Activated CD4-positive, alpha-beta T cell treated with anti-CD3 and anti-CD28 coated beads for 36 hours (primary cell): ENCODE measurements at regions of chr15 and their contacts with region 1.

Region 1: GRCh38 chr15:80058851-80059785 is at the start of gene ZFAND6:
- DNase-seq: peak; percentile 97
- ATAC-seq: peak; percentile 83
- H3K4me3 Mint-ChIP-seq: peak within 1 kb of the TSS; percentile 85
- H3K27ac Mint-ChIP-seq: peak within 1 kb of the TSS; percentile 87
- H3K4me1 Mint-ChIP-seq: peaks cover 25% of the 10 kb centered on the region
- H3K27me3 Mint-ChIP-seq: no peaks in the 10 kb centered on the region
- total RNA-seq, gene ZFAND6: 30.2 to 37.2 TPM

Region 2: GRCh38 chr15:79310983-79311900 is 747.9 kb before region 1 on chr15 and contains the start of gene TMED3:
- CTCF ChIA-PET with region 1: no interaction called
- POLR2A ChIA-PET with region 1: no interaction called
- intact Hi-C with region 1: loop called in 1 of 2 experiments (anchors 2 kb)
- DNase-seq: peak; percentile 90
- ATAC-seq: peak; percentile 98
- H3K4me3 Mint-ChIP-seq: peak within 1 kb of the TSS; percentile 81
- H3K27ac Mint-ChIP-seq: peak within 1 kb of the TSS; percentile 77
- H3K4me1 Mint-ChIP-seq: peaks cover 28% of the 10 kb centered on the region
- H3K27me3 Mint-ChIP-seq: peaks cover 23% of the 10 kb centered on the region
- total RNA-seq, gene TMED3: 33.5 to 37.2 TPM

Region 3: DNA sequence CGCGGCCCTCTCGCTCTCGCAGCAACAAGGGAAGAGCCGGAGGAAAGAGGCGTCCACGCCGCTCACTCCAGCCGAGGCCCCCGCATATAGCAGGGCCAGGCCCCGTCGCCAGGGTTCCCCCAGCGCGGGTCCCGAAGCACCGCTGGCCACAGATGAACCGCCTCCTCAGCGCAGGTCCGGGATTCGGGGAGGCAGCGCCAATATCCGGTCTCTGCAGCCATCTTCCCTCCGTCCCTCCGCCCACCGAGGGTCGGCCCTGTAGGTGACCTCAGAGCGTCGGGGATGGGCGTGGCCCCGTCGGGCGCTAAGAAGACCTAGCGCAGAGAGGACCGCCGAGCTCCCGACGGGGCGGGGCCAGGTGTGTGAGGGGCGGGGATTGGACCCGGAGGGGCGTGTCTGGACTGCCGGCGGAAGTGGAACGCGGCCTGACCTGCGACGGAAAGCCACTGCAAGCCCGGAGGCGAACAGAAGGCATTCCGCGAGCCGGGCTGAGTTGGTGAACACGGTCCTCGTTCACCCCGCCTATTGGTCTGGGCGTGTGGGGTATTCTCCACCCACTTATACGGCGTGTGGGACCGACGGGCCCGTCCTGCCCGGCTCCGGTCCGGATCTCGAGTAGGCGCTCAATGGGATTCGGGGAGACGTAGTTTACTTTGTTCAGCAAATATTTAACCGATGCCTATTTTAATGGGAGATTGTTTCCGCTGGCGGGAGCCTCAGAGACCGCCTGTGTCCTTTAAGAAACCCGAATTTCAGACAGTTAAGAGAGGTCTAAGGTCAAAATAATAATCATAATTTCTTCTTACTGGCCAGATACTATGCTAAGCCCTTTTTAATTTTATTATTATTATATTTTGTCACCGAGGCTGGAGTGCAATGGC is 135.4 kb before region 1 on chr15:
- CTCF ChIA-PET with region 1: no interaction called
- POLR2A ChIA-PET with region 1: interaction called, 4 read pairs
- intact Hi-C with region 1: loop called (anchors 1 kb)
- DNase-seq: peak; percentile 99
- ATAC-seq: peak; percentile 94
- H3K4me3 Mint-ChIP-seq: peak overlapping the region; percentile 89
- H3K27ac Mint-ChIP-seq: peak overlapping the region; percentile 94
- H3K4me1 Mint-ChIP-seq: peaks cover 23% of the 10 kb centered on the region
- H3K27me3 Mint-ChIP-seq: no peaks in the 10 kb centered on the region

Region 4: GRCh38 chr15:80072285-80072994 is 13.3 kb after region 1 on chr15:
- CTCF ChIA-PET with region 1: interaction called, 17 read pairs
- POLR2A ChIA-PET with region 1: interaction called, 5 read pairs
- intact Hi-C with region 1: loop called (anchors 1 kb)
- DNase-seq: no peak
- ATAC-seq: peak; percentile 98
- H3K4me3 Mint-ChIP-seq: peak overlapping the region; percentile 80
- H3K27ac Mint-ChIP-seq: peak overlapping the region; percentile 40
- H3K4me1 Mint-ChIP-seq: peaks cover 59% of the 10 kb centered on the region
- H3K27me3 Mint-ChIP-seq: no peaks in the 10 kb centered on the region

Region 5: DNA sequence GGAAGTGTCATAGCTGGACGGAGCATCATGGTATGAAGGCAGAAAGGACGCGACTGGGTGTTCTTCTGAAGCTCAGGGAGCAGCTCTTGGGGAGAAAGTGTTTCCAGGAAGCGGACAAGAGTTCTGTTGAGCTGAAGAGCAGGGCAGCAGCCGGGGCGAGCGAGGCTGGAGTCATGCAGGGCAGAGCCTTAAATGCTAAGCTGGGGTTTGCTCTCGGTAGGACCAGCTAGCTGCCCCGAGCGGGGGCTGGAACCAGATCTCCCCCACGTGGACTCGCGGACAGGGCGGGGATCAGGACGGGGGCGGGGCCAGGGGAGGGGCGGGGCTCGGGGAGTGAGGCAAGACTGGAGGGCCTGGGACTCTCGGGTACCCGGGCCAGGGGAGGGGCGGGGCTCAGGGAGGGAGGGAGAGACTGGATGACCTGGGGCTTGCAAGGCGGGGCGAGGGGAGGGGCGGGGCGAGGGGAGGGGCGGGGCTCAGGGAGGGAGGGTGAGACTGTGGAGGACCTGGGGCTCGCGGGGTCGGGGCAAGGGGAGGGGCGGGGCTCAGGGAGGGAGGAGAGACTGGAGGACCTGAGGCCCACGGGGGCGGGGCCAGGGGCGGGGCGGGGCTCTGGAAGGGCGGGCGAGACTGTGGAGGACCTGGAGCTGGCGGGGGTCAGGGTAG is 93.2 kb after region 1 on chr15:
- CTCF ChIA-PET with region 1: no interaction called
- POLR2A ChIA-PET with region 1: interaction called, 4 read pairs
- intact Hi-C with region 1: loop called (anchors 1 kb)
- DNase-seq: peak; percentile 98
- ATAC-seq: peak; percentile 81
- H3K4me3 Mint-ChIP-seq: peak overlapping the region; percentile 77
- H3K27ac Mint-ChIP-seq: peak overlapping the region; percentile 76
- H3K4me1 Mint-ChIP-seq: peaks cover 27% of the 10 kb centered on the region
- H3K27me3 Mint-ChIP-seq: no peaks in the 10 kb centered on the region

Region 6: GRCh38 chr15:80173022-80173759 is 114.1 kb after region 1 on chr15:
- CTCF ChIA-PET with region 1: interaction called, 6 read pairs
- POLR2A ChIA-PET with region 1: no interaction called
- intact Hi-C with region 1: loop called (anchors 1 to 5 kb)
- DNase-seq: peak; percentile 85
- ATAC-seq: peak; percentile 88
- H3K4me3 Mint-ChIP-seq: no peak overlapping the region
- H3K27ac Mint-ChIP-seq: no peak overlapping the region
- H3K4me1 Mint-ChIP-seq: no peaks in the 10 kb centered on the region
- H3K27me3 Mint-ChIP-seq: no peaks in the 10 kb centered on the region